AG04449 (cell line): ENCODE measurements at regions of chr17 and their contacts with region 1.

Region 1: DNA sequence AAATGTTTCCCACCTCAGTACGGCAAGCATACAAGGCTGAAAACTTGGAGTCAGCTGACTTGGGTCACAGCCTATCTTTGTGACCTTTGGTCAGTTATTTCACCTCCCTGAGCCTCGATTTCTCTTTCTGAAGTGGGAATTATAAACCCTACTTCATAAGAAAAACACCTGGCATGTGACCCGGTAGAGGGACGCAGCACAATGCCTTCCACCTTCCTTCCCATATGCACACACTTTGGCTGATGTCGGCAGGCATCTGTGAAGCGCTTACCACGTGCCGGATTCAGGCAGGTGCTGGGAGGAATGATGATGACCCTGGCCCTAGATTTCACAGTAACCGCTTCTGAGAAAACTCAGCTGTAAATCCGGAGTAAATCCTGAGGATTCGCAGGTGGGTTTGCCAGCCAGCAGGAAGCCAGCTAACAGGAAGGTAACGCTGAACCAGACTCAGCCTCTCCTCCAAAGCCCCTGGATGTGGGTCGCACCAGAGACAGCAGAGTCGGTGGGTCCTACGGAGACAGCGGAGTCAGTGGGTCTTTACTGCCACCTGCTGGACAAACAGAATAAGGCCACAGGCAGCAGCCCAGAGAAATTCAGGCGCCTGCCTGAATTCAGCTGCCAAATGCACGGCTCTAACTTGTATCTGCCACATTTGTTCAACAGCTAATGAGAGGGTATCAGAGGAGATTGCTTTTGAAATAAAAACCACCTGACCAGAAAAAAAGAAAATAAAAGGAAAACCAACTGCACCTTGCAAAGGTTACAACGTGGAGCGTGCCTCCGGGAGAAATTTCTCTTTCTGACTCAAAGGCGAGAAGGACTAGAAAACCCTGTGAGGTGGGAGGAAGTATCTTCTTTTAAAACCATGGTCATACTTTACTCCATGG is 16.6 kb downstream of the COPRS start:
- DNase-seq: no peak
- H3K4me3 ChIP-seq: no peak overlapping the region; the same call in none of the 2 replicates
- CTCF ChIP-seq: peak; percentile 83

Region 2: DNA sequence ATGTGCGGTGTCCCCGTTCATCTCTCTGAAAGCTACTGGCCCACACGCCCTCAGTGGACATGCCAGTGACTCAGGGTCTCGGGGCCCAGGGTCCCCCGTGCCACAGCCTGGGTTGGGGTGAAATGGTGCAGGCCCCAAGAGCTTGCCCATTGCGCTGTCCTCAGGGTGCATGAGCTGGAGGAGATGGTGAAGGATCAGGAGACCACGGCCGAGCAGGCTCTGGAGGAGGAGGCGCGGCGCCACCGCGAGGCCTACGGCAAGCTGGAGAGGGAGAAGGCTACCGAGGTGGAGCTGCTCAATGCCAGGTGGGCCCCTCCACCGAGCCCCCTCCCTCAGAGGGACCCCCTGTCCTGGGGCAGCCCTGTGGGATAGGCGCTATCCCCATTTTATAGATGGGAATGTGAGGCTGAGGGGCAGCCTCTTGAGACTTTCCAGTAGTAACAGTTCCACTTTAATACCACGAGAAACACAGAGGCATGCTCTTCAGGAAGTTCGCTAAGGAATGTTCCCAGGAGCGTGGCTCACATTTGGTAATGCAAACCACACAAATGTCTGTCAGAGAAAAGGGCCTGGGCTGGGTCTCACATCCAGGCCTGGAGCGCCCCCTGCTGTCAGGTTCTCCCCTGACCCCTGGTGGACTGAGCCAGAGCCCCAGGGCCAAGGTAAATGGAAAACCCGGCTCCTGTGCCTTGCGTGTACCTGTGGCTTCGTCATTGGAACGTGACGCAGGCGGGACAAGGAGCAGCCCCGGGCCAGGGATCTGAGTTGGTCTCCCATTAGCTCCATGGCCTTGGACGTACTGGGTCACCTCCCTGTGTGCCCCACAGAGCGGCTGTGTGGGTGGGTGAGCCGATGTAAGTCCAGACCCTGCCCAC is 317.3 kb before region 1 on chr17:
- CTCF ChIA-PET with region 1: interaction called, 154 read pairs
- POLR2A ChIA-PET with region 1: no interaction called
- DNase-seq: peak; percentile 80
- H3K4me3 ChIP-seq: no peak overlapping the region
- CTCF ChIP-seq: peak; percentile 89

Region 3: GRCh38 chr17:31558748-31559644 is 283.4 kb before region 1 on chr17:
- CTCF ChIA-PET with region 1: interaction called, 200 read pairs
- POLR2A ChIA-PET with region 1: interaction called, 5 read pairs
- DNase-seq: no peak
- H3K4me3 ChIP-seq: peak overlapping the region; percentile 84
- CTCF ChIP-seq: peak; percentile 52

Region 4: DNA sequence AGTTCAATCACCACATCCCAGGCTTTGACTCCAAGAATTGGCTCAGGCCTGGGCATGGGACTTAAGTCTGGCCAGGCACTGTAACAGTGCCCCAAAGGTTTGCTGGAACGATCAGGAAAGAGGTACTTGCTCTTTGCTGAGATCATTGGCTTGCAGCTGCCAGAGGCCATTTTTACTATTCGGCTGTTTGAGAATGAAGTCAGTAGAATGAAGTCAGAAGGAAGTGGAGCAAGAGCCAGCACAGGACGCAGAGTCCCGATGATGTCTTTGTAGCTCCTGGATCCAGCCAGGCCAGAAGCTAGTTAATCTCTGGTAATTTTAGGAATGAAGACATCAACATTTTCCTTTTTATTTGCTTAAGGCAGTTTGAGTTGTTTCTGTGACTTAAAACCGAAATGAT is 255.5 kb before region 1 on chr17:
- CTCF ChIA-PET with region 1: interaction called, 30 read pairs
- POLR2A ChIA-PET with region 1: no interaction called
- DNase-seq: no peak
- H3K4me3 ChIP-seq: no peak overlapping the region
- CTCF ChIP-seq: no peak

Region 5: GRCh38 chr17:31696184-31696602 is 146.2 kb before region 1 on chr17:
- CTCF ChIA-PET with region 1: interaction called, 30 read pairs
- POLR2A ChIA-PET with region 1: no interaction called
- DNase-seq: peak; percentile 94
- H3K4me3 ChIP-seq: no peak overlapping the region
- CTCF ChIP-seq: peak; percentile 16